ENCODE measurements at regions of chr19 and their contacts with region 1.

Region 1: GRCh38 chr19:47210689-47211316 is 20.2 kb downstream of the BBC3 start:
- DNase-seq: peak; percentile 95
- ATAC-seq: peak; percentile 97
- H3K4me3 Mint-ChIP-seq: no peak overlapping the region
- H3K27ac Mint-ChIP-seq: peak overlapping the region; percentile 83
- H3K4me1 Mint-ChIP-seq: peaks cover 14% of the 10 kb centered on the region
- H3K27me3 Mint-ChIP-seq: no peaks in the 10 kb centered on the region
- CTCF ChIP-seq: peak; percentile 85

Region 2: GRCh38 chr19:47143322-47144073 is 67.3 kb before region 1 on chr19:
- CTCF ChIA-PET with region 1: interaction called, 39 read pairs
- POLR2A ChIA-PET with region 1: interaction called, 4 read pairs
- intact Hi-C with region 1: no loop called
- DNase-seq: no peak
- ATAC-seq: peak; percentile 29
- H3K4me3 Mint-ChIP-seq: no peak overlapping the region
- H3K27ac Mint-ChIP-seq: no peak overlapping the region
- H3K4me1 Mint-ChIP-seq: peaks cover 53% of the 10 kb centered on the region
- H3K27me3 Mint-ChIP-seq: no peaks in the 10 kb centered on the region
- CTCF ChIP-seq: no peak

Region 3: DNA sequence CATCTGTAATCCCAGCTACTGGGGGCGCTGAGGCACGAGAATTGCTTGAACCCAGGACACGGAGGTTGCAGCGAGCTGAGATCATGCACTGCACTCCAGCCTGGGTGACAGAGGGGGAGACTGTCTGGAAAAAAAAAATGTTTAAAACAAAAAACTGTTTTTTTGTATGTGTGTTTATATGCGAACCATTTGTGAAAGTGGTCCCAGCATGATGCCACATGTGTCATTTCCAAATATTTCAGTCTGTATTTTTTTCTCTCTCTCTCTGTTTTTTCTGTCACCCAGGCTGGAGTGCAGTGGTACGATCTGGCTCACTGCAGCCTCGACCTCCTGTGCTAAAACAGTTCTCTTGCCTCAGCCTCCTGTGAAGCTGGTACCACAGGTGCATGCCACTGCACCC is 42.7 kb before region 1 on chr19:
- CTCF ChIA-PET with region 1: interaction called, 12 read pairs
- POLR2A ChIA-PET with region 1: no interaction called
- intact Hi-C with region 1: no loop called
- DNase-seq: no peak
- ATAC-seq: no peak
- H3K4me3 Mint-ChIP-seq: no peak overlapping the region
- H3K27ac Mint-ChIP-seq: no peak overlapping the region
- H3K4me1 Mint-ChIP-seq: peaks cover 10% of the 10 kb centered on the region
- H3K27me3 Mint-ChIP-seq: no peaks in the 10 kb centered on the region
- CTCF ChIP-seq: no peak

Region 4: DNA sequence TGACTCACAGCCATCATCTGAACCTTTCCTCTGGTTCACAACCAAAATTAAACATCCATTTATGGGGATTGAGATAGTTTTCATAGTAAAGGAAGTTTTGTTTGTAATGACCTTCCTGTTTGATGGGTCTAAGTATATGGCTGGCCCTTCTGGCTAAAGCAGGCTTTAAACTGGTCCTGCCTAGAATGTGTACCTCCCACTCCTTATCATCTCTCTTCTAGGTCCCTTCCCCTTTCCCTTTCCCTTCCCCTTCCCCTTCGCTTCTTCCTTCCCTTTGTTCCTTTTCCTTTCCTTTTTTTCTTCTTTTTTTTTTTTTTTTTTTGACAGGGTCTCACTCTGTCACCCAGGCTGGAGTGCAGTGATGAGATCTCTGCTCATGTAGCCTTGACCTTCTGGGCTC is 15.4 kb before region 1 on chr19:
- CTCF ChIA-PET with region 1: interaction called, 36 read pairs
- POLR2A ChIA-PET with region 1: interaction called, 8 read pairs
- intact Hi-C with region 1: no loop called
- DNase-seq: no peak
- ATAC-seq: no peak
- H3K4me3 Mint-ChIP-seq: no peak overlapping the region
- H3K27ac Mint-ChIP-seq: no peak overlapping the region
- H3K4me1 Mint-ChIP-seq: peaks cover 18% of the 10 kb centered on the region
- H3K27me3 Mint-ChIP-seq: no peaks in the 10 kb centered on the region
- CTCF ChIP-seq: no peak

Region 5: DNA sequence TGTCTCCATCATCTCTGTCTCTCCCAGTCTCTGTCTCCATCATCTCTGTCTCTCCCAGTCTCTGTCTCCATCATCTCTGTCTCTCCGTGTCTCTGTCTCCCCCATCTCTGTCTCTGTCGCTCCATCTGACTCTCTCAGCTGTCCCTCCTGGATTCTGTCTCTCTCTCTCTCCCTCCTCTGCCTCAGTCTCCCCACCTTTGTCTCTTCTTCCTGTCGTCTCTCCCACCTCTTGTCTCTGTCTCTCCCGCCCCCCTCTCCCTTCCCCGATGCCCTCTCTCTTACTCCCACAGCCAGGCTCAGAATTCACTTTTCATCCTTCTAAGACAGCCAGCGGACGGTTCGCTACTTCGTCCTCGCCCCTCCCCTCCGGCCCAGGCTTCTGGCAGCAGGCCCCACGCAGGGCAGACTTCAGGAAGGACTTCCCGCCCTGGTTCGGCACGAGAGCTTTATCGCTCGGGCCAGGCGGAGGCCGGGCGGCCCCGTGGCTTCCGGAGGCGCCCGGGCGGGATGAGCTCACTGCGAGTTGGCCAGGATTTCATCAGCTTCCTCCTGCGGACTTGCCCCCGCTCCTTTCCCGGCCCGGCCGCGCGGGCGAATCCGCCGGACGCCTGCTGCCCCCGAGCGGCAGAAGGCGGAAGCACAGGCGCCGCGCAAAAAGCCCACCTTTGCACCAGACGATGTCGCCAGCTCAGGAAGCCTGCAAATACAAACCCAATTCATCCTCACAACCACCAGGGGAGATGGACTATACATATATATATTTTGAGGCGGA is 33.2 kb after region 1 on chr19:
- CTCF ChIA-PET with region 1: interaction called, 399 read pairs
- POLR2A ChIA-PET with region 1: interaction called, 35 read pairs
- intact Hi-C with region 1: loop called (anchors 2 kb)
- DNase-seq: peak; percentile 95
- ATAC-seq: peak; percentile 71
- H3K4me3 Mint-ChIP-seq: peak overlapping the region; percentile 81
- H3K27ac Mint-ChIP-seq: peak overlapping the region; percentile 98
- H3K4me1 Mint-ChIP-seq: peaks cover 26% of the 10 kb centered on the region
- H3K27me3 Mint-ChIP-seq: no peaks in the 10 kb centered on the region
- CTCF ChIP-seq: peak; percentile 99

Region 6: DNA sequence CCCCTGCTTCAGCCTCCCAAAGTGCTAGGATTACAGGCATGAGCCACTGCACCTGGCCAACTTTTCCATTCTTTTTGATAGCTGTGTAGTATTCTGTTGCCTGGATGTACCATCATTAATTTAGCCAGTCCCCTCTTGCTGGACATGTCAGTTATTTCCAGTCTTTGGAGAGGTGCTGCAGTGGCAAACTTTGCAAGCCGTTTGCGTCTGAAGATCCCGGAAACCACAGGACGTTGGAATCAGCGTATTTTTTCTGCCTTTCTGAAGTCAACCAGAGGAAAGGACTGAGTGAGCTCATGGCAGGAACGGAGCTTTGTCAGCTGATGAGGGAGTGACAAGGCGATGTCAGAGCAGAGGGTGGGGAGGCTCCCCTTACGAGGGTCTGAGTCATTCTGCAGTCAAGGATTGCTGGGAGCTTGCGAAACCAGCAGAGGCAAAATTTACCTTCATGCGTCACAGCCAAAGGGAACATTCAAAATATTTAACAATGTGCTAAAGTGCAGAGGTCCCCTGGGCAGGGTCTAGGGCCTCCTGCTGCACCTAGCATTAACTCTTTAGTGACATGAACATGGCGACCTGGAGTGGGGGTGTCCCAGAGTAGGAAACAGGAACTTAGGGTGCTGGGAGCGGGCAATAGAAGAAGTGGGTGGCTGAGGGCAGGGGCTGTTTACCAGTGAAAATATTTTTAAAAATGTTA is 104.5 kb after region 1 on chr19:
- CTCF ChIA-PET with region 1: no interaction called
- POLR2A ChIA-PET with region 1: no interaction called
- intact Hi-C with region 1: no loop called
- DNase-seq: peak; percentile 54
- ATAC-seq: peak; percentile 87
- H3K4me3 Mint-ChIP-seq: no peak overlapping the region
- H3K27ac Mint-ChIP-seq: no peak overlapping the region
- H3K4me1 Mint-ChIP-seq: peaks cover 4% of the 10 kb centered on the region
- H3K27me3 Mint-ChIP-seq: peaks cover 8% of the 10 kb centered on the region
- CTCF ChIP-seq: no peak

Measured in activated CD8-positive, alpha-beta T cell treated with anti-CD3 and anti-CD28 coated beads for 36 hours (primary cell).